Mammary epithelial cell (primary cell): ENCODE measurements at regions of chr1 and their contacts with region 1.

Region 1: DNA sequence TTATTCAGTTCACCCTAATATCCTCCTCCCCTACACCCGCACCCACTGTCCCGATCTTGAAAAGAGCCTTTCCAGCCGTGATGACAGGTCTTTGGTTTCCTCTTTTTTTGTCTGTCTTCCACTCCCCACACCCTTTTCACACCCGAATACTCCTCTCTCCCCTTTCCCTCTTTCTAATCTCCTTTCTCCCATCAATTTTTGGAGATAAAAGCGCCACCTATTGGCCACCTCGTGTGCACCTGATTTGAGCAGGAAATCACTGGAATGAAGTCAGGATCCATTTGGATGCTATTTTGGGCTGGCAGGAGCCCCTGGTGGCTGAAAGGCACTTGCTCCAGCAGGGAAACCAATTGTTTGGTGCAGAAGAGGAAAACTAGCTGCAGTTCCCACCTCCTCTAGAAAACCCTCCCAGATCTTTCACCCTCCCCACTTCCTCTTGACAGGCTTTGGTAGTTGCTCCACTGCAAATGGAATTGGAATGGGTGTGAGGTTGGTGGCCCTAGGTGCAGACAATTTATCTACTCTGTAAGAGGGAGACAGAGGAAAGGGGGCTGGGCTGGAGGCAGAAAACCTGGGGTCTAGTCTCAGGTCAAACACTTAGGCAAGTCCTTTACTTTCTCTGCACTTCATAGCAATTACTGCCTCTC is 8.4 kb downstream of the FOXE3 start:
- DNase-seq: peak; percentile 48
- H3K4me3 ChIP-seq: no peak overlapping the region
- H3K27ac ChIP-seq: no peak overlapping the region
- H3K4me1 ChIP-seq: no peaks in the 10 kb centered on the region
- H3K27me3 ChIP-seq: no peaks in the 10 kb centered on the region
- CTCF ChIP-seq: peak; percentile 84 to 94

Region 2: GRCh38 chr1:47388891-47389238 is 35.6 kb before region 1 on chr1:
- CTCF ChIA-PET with region 1: no interaction called
- dilution Hi-C with region 1: no loop called
- in situ Hi-C with region 1: loop called in 1 of 2 experiments (anchors 5 kb)
- intact Hi-C with region 1: loop called (anchors 1 kb)
- DNase-seq: peak; percentile 56
- H3K4me3 ChIP-seq: no peak overlapping the region
- H3K27ac ChIP-seq: no peak overlapping the region
- H3K4me1 ChIP-seq: no peaks in the 10 kb centered on the region
- H3K27me3 ChIP-seq: no peaks in the 10 kb centered on the region
- CTCF ChIP-seq: peak; percentile 87 to 89